GM12878 (cell line): ENCODE measurements at regions of chr10 and their contacts with region 1.

Region 1: GRCh38 chr10:123449234-123449962 is 216.8 kb upstream of the GPR26 start:
- DNase-seq: no peak
- ATAC-seq: no peak
- H3K4me3 ChIP-seq: no peak overlapping the region
- H3K27ac ChIP-seq: no peak overlapping the region
- H3K4me1 ChIP-seq: peaks cover 12% of the 10 kb centered on the region
- H3K27me3 ChIP-seq: no peaks in the 10 kb centered on the region
- CTCF ChIP-seq: no peak
- EP300 ChIP-seq: no peak
- POLR2A ChIP-seq: no peak
- RAD21 ChIP-seq: no peak

Region 2: DNA sequence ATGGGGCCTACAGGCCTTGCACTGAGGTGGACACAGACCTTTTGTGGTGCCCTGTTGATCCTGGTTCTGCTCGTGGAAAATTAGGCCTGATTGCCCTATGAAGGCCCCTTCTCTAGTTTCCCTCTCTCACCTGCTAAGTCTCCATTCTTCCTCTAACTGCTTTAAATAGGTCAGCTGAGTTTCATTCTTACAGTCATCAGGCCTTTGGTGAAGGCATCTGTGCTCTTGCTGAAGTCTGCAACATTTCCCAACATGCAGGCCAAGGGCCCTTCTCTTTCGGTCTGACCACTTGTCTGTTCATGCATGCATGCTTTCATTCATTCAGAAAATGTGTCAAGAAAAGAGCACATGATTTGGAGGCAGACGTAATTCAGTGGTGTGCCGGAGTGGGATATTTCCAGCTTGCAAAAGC is 51.2 kb before region 1 on chr10:
- CTCF ChIA-PET with region 1: no interaction called
- POLR2A ChIA-PET with region 1: no interaction called
- RAD21 ChIA-PET with region 1: no interaction called
- SMC1A ChIA-PET with region 1: no interaction called
- in situ Hi-C with region 1: no loop called
- intact Hi-C with region 1: no loop called
- DNase-seq: peak; percentile 99
- ATAC-seq: peak; percentile 77
- H3K4me3 ChIP-seq: no peak overlapping the region
- H3K27ac ChIP-seq: peak overlapping the region; percentile 99
- H3K4me1 ChIP-seq: peaks cover 91% of the 10 kb centered on the region
- H3K27me3 ChIP-seq: no peaks in the 10 kb centered on the region
- CTCF ChIP-seq: no peak
- EP300 ChIP-seq: peak; percentile 98 to 99
- POLR2A ChIP-seq: peak; percentile 23; the same call in 1 of the 2 replicates
- RAD21 ChIP-seq: peak; percentile 35

Region 3: GRCh38 chr10:123472606-123473005 is 23.2 kb after region 1 on chr10:
- CTCF ChIA-PET with region 1: no interaction called
- POLR2A ChIA-PET with region 1: interaction called, 16 read pairs
- RAD21 ChIA-PET with region 1: no interaction called
- SMC1A ChIA-PET with region 1: no interaction called
- in situ Hi-C with region 1: no loop called
- intact Hi-C with region 1: no loop called
- DNase-seq: no peak
- ATAC-seq: peak; percentile 42
- H3K4me3 ChIP-seq: no peak overlapping the region
- H3K27ac ChIP-seq: no peak overlapping the region
- H3K4me1 ChIP-seq: no peaks in the 10 kb centered on the region
- H3K27me3 ChIP-seq: no peaks in the 10 kb centered on the region
- CTCF ChIP-seq: no peak
- EP300 ChIP-seq: no peak
- POLR2A ChIP-seq: no peak
- RAD21 ChIP-seq: no peak